ENCODE measurements at regions of chr13 and their contacts with region 1.

Region 1: DNA sequence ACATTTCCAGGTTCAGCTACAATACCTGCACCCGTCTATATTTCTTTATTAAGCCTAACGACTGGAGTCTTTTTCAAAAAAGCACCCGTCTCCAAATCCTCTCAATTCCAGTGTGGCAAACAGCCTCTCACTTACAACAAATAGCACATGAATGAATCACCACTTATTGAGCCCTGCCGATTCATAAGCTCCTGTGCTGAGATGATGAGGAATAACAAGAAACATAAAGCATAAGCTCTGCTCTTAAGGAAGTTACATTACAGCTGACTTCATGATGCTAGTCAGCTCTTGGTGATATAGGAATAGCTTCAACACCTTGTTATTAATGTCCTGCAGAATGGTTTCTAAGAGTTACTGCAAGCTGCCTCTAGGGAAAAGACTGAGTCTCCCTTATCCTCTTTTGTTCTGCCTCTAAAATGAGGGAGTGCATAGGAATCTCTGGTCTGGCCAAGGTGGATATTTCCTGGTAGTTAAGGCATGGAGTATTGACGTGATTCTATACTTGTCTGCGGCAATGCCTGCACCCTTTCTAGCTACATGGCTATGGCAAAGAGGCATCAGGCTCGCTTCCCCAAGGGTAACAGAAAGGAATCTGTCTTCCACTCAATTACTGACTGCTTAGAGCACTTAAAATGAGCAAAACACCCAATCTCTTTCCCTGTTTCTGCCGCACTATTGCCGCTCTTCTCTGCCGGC is 195.7 kb downstream of the KLF12 start:
- DNase-seq: peak; percentile 75
- ATAC-seq: peak; percentile 78
- H3K4me3 ChIP-seq: peak overlapping the region; percentile 32; the same call in 1 of the 2 replicates
- H3K27ac ChIP-seq: peak overlapping the region; percentile 43
- H3K4me1 ChIP-seq: peaks cover 46% of the 10 kb centered on the region
- H3K27me3 ChIP-seq: no peaks in the 10 kb centered on the region
- CTCF ChIP-seq: no peak

Region 2: DNA sequence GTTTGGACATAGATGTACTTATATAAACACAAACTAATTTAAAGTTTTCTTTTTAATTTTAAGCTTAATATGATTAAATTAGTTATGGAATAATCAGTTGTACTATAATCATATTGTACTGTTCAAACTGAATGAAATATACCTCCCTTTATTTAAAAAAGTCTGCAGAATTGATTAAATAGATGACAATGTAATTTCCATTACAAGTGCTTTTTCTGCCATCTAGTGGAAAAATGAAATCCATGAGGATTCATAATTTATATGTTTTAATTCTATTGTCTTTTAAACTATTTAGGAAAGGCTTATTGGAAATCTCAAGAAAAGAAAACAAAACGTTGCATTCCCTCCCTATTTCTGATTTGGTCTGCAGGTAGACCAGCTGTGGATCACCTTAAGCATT is 1241.9 kb before region 1 on chr13:
- CTCF ChIA-PET with region 1: no interaction called
- POLR2A ChIA-PET with region 1: no interaction called
- intact Hi-C with region 1: no loop called
- DNase-seq: peak; percentile 46
- ATAC-seq: no peak
- H3K4me3 ChIP-seq: no peak overlapping the region
- H3K27ac ChIP-seq: no peak overlapping the region
- H3K4me1 ChIP-seq: no peaks in the 10 kb centered on the region
- H3K27me3 ChIP-seq: no peaks in the 10 kb centered on the region
- CTCF ChIP-seq: peak; percentile 59

Region 3: GRCh38 chr13:73107481-73107880 is 831.0 kb before region 1 on chr13:
- CTCF ChIA-PET with region 1: no interaction called
- POLR2A ChIA-PET with region 1: no interaction called
- intact Hi-C with region 1: no loop called
- DNase-seq: no peak
- ATAC-seq: no peak
- H3K4me3 ChIP-seq: no peak overlapping the region
- H3K27ac ChIP-seq: no peak overlapping the region
- H3K4me1 ChIP-seq: no peaks in the 10 kb centered on the region
- H3K27me3 ChIP-seq: no peaks in the 10 kb centered on the region
- CTCF ChIP-seq: no peak

Region 4: GRCh38 chr13:73835138-73835721 is 103.3 kb before region 1 on chr13:
- CTCF ChIA-PET with region 1: interaction called, 3 read pairs
- POLR2A ChIA-PET with region 1: no interaction called
- intact Hi-C with region 1: loop called (anchors 5 kb)
- DNase-seq: peak; percentile 67
- ATAC-seq: peak; percentile 27; the same call in 1 of the 2 replicates
- H3K4me3 ChIP-seq: no peak overlapping the region
- H3K27ac ChIP-seq: no peak overlapping the region
- H3K4me1 ChIP-seq: peaks cover 22% of the 10 kb centered on the region
- H3K27me3 ChIP-seq: no peaks in the 10 kb centered on the region
- CTCF ChIP-seq: peak; percentile 68

Region 5: DNA sequence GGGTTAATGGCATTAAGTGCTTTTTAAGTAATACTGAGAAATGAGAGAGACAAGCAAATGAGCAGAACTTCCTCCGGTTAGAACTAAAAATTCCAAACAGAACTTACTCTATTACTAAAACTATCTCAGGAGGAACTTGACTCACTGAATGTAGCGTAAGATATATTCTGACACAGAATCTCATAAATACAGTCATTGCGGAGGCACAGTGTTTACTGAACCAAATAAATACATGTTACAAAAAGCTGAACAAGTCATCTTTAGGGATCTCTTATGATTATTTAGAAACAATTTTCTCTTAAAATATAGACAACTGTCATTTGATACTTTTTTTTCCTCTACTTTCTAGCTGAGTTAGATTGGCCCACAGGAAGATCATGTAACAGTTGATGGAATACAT is 87.4 kb before region 1 on chr13:
- CTCF ChIA-PET with region 1: no interaction called
- POLR2A ChIA-PET with region 1: no interaction called
- intact Hi-C with region 1: loop called (anchors 5 kb)
- DNase-seq: peak; percentile 77
- ATAC-seq: peak; percentile 93
- H3K4me3 ChIP-seq: peak overlapping the region; percentile 35; the same call in 1 of the 2 replicates
- H3K27ac ChIP-seq: peak overlapping the region; percentile 90
- H3K4me1 ChIP-seq: peaks cover 47% of the 10 kb centered on the region
- H3K27me3 ChIP-seq: no peaks in the 10 kb centered on the region
- CTCF ChIP-seq: no peak

Region 6: DNA sequence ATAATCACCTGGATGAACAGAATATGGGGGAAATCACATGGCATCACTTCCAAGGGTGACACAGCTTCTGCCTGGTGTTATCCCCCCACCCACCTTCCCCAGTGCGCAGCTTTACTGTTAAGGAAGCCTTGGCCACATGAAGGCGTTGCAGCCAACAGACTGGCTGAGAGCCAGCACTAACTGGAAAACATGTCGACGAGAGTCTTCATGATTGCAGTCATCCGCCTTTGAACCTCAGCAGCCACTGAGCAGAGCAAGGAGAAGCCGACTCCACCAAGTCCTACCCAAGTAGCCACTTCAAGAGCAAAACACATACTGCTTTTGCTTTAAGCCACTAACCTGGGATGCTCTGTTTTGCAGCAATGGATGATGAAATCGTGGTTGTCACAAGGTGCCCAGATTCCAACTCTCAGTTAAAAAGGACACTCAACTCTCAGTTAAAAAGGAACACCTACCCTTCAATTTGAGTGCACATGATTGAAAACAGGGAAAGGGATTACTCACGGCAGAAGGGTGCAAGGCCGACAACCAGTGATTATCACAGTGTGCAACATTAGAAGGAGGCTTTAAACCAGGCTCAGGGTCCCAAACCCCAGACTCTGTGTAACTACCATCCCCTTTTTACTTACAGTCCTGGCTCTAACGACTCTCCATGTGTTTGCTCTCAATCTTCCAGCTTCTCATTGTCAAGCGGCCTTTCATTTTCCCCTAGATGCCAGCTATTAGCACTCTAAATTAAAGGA is 46.6 kb after region 1 on chr13:
- CTCF ChIA-PET with region 1: no interaction called
- POLR2A ChIA-PET with region 1: no interaction called
- intact Hi-C with region 1: no loop called
- DNase-seq: no peak
- ATAC-seq: no peak
- H3K4me3 ChIP-seq: no peak overlapping the region
- H3K27ac ChIP-seq: no peak overlapping the region
- H3K4me1 ChIP-seq: no peaks in the 10 kb centered on the region
- H3K27me3 ChIP-seq: no peaks in the 10 kb centered on the region
- CTCF ChIP-seq: no peak

Measured in PC-3 (cell line).